Activated naive CD4-positive, alpha-beta T cell treated with anti-CD3 and anti-CD28 coated beads for 36 hours (primary cell): ENCODE measurements at regions of chr12 and their contacts with region 1.

Region 1: DNA sequence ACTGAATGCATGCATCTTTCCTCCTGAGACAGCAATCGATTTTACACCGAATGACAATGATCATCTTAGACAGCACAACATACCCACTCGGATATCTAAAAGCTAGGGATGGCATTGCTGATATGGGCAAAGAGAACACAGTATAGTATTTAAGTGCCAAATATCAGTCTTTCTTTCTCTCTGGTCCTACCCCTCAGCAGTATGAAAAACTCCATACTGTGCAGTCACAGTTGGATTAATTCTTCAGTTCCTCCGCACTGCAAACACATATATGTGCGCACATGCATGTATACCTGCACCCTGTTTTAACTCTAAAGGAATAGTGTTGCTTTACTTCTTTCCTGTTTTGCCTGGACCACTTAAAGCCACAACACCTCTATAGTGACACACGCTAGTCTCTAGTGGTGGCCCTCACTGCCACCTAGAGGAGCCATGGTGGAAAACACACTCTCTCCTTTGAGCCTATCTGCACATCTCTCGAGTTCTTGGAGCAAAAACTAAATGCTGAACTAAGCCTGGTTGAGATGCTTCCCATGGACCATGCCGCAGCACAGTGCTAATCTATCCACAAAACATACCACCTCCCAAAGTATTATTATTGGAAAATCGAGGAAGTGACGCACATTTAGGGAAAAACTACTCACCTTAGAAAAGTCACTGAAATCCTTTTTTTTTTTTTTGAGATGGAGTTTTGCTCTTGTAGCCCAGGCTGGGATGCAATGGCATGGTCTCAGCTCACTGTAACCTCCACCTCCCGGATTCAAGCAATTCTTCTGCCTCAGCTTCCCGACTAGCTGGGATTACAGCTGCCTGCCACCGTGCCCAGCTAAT is 11.9 kb downstream of the TMEM52B start:
- DNase-seq: peak; percentile 74
- H3K4me3 Mint-ChIP-seq: no peak overlapping the region
- H3K27ac Mint-ChIP-seq: no peak overlapping the region
- H3K4me1 Mint-ChIP-seq: peaks cover 4% of the 10 kb centered on the region
- H3K27me3 Mint-ChIP-seq: peaks cover 6% of the 10 kb centered on the region

Region 2: GRCh38 chr12:10012630-10013330 is 178.0 kb before region 1 on chr12:
- CTCF ChIA-PET with region 1: no interaction called
- intact Hi-C with region 1: loop called (anchors 1 kb)
- DNase-seq: no peak
- H3K4me3 Mint-ChIP-seq: no peak overlapping the region
- H3K27ac Mint-ChIP-seq: no peak overlapping the region
- H3K4me1 Mint-ChIP-seq: no peaks in the 10 kb centered on the region
- H3K27me3 Mint-ChIP-seq: peaks cover 6% of the 10 kb centered on the region

Region 3: DNA sequence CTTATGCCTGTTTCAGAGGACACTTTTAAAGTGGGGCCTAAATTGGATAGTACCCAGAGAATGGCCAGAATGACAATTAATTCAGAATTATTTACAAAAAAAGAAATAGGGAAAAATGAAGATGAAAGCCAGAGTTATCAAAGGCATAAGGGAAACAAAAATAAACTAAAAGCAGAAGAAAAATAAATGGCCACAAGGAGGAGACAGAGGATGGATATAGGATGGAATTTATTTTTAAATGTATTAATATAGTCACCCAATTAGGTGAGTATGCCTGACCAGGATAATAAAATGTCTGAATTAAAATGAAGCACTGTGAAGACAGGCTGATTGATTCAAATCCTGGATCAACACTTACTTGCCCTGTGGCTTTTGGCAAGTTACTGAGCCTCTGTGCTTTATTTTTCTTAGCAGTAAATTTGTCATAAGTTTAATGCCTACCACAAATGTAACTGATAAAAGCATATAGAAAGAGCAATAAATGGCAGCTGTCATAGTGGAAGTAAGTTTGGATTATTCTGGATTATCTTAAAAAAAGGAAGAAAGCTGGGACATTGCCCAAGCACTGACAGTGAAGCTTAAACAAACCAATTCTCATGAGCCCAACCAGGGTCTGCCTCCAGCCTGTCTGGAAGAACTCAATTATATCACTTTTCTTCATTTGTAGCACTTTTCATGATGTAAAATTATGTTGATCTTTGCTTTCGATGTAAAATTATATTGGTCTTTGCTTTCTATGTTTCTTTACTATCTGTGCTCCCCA is 156.8 kb before region 1 on chr12:
- CTCF ChIA-PET with region 1: interaction called, 3 read pairs
- intact Hi-C with region 1: loop called (anchors 1 kb)
- DNase-seq: no peak
- H3K4me3 Mint-ChIP-seq: no peak overlapping the region
- H3K27ac Mint-ChIP-seq: no peak overlapping the region
- H3K4me1 Mint-ChIP-seq: no peaks in the 10 kb centered on the region
- H3K27me3 Mint-ChIP-seq: no peaks in the 10 kb centered on the region

Region 4: DNA sequence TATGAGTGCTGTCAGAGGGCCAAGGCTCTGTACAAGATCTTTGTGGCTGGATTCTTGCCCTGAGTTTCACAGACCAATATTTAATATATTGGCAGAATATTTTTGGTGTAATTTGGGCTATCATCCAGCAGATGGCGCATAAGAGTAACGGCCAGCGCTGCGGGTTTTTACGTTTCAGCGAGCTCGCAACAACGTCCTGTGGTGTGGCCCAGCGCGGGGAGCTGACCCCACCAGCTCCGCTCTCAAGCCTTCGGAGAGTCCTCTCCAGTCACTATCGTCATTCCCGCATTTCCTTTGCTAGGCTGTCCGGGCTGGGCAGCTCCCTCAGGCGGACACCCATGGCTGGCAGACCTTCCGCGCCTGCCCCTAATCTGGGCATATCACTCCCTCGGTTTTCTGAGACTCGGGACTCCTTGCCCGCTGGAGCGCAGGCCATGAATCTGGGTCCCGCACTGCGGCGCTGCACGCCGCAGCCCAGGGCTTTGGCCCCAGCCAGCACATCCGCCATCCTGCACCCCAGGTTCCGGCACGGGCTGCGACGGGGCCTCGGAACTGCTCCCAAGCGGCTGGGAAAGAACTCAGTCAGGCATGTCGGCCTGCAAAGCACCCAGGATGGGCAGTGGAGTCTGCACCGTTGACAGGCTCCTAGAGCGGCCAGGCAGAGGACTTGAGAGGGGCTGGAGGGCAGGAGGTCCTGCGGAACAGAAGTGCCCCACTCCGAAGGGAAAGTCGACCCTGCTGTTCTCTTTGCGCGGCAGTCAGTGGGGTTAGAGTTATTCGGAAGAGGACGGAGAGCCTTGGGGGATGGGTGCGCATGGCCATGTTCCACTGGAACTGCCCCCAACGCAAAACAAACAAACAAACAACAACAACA is 37.3 kb before region 1 on chr12:
- CTCF ChIA-PET with region 1: interaction called, 63 read pairs
- intact Hi-C with region 1: loop called (anchors 1 kb)
- DNase-seq: peak; percentile 66
- H3K4me3 Mint-ChIP-seq: peak overlapping the region; percentile 76
- H3K27ac Mint-ChIP-seq: peak overlapping the region; percentile 63
- H3K4me1 Mint-ChIP-seq: peaks cover 10% of the 10 kb centered on the region
- H3K27me3 Mint-ChIP-seq: peaks cover 18% of the 10 kb centered on the region

Region 5: DNA sequence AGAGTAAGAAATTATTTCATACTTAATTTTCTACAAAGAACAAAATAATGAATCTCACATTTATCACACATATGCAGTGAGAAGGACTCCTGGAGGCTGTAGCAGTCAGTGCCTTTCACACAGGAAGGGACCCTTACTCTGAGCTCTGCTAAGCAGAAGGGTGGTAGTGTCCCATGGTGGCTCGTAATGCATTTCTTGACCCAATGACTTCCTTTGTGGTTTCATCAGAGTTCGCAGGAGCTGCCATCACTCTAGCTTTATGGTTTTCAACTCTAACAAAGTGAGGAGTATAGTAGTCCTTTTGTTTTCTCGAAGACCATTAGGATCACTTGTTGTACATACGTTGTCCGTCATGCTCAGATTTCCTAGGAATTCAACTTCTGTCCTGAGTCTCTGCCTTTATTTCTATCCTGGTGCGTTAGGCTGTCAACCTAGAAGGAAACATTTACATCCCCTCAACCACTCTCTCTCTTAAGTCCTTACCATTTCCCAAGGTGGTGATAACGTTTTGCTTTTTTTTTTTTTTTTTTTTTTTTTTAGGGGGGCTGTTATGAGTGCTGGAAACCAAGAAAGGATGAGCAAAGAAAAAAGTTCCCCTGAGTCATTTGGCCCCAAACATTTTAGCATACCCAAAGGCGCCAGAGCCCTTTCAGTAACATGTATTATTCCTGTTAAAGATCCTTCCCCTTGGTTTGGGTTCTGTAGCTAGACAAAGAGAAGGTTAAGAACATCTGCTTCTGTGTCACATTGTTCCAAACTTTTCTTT is 59.1 kb after region 1 on chr12:
- CTCF ChIA-PET with region 1: no interaction called
- intact Hi-C with region 1: no loop called
- DNase-seq: no peak
- H3K4me3 Mint-ChIP-seq: no peak overlapping the region
- H3K27ac Mint-ChIP-seq: no peak overlapping the region
- H3K4me1 Mint-ChIP-seq: peaks cover 10% of the 10 kb centered on the region
- H3K27me3 Mint-ChIP-seq: no peaks in the 10 kb centered on the region

Region 6: DNA sequence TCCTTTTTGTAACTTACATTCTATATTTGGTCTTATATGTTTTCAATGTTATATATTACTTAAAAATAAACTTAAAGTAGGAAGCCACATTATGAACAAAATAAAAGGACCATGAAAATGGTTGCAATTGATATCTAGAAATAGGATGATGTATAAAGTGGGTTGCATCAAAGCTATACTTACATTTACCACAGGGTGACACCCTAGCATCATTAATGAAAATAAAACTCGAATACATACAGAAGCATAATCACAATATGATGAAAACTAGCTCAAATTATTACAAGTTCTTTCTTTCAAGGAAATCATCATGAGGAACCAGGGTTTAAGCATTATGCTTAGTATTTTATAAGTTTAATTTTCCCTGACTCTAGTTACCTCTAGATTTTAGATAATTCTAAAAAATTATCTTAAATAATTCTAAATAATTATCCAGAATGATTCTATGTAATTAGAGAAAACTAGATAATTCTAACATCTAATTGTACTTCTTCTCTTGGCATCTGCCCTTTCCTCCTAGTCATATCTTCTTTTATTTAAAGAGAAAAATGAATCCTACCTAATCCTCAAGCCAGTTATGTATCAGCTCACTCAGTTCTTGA is 580.5 kb after region 1 on chr12:
- CTCF ChIA-PET with region 1: no interaction called
- intact Hi-C with region 1: no loop called
- DNase-seq: no peak
- H3K4me3 Mint-ChIP-seq: no peak overlapping the region
- H3K27ac Mint-ChIP-seq: no peak overlapping the region
- H3K4me1 Mint-ChIP-seq: no peaks in the 10 kb centered on the region
- H3K27me3 Mint-ChIP-seq: peaks cover 34% of the 10 kb centered on the region